MCF 10A (cell line): ENCODE measurements at regions of chr16 and their contacts with region 1.

Region 1: GRCh38 chr16:30378236-30379204 is 3.8 kb downstream of the SEPTIN1 start:
- DNase-seq: peak; percentile 97
- H3K4me3 Mint-ChIP-seq: peak overlapping the region; percentile 92
- H3K27ac Mint-ChIP-seq: peak overlapping the region; percentile 99
- H3K4me1 Mint-ChIP-seq: peaks cover 13% of the 10 kb centered on the region
- H3K27me3 Mint-ChIP-seq: no peaks in the 10 kb centered on the region
- CTCF ChIP-seq: no peak

Region 2: DNA sequence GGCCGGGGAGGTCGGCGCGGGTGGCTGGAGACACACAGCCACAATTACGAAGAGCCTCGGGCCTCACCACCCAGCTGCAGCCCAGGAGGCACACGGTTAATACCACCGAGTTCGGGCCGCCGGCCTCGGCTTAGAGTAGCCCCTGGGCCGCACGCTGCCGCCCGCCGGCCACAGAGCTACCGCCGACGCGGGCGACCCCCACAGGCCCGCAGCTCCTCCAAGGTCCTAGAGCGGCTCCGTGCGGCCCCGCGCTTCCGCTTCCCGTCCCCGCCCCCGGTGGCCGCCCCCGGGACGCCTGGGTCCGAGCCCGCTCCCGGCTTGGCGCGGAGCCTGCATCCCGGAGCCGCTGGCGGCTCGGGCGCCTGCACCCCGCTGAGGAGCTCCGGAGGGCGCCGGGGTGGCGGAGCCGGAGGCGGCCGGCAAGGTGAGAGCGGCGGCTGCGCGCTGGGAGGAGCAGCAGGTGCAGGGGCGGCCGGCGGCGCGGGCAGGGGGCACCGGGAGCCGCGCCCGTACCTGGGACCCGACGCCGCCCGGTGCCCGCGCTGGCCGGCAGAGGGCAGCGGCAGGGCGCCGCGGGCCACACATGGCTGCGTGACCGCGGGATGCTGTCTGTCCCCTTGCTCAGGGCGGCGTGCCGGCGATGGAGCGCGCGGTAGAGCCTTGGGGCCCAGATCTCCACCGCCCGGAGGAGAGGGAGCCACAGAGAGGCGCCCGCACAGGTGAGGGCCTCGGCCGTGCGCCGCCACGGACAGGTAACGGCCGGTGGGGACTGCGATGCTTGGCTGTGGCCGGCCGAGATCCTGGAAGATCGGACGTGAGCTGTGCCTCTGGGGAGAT is 16.9 kb after region 1 on chr16 and contains the start of gene ZNF48:
- CTCF ChIA-PET with region 1: interaction called, 5 read pairs
- POLR2A ChIA-PET with region 1: interaction called, 20 read pairs
- intact Hi-C with region 1: no loop called
- DNase-seq: peak; percentile 56
- H3K4me3 Mint-ChIP-seq: peak within 1 kb of the TSS; percentile 83
- H3K27ac Mint-ChIP-seq: peak within 1 kb of the TSS; percentile 44
- H3K4me1 Mint-ChIP-seq: peaks cover 7% of the 10 kb centered on the region
- H3K27me3 Mint-ChIP-seq: no peaks in the 10 kb centered on the region
- CTCF ChIP-seq: peak; percentile 39
- total RNA-seq, gene ZNF48: 11.0 and 12.4 TPM in 2 replicates

Region 3: DNA sequence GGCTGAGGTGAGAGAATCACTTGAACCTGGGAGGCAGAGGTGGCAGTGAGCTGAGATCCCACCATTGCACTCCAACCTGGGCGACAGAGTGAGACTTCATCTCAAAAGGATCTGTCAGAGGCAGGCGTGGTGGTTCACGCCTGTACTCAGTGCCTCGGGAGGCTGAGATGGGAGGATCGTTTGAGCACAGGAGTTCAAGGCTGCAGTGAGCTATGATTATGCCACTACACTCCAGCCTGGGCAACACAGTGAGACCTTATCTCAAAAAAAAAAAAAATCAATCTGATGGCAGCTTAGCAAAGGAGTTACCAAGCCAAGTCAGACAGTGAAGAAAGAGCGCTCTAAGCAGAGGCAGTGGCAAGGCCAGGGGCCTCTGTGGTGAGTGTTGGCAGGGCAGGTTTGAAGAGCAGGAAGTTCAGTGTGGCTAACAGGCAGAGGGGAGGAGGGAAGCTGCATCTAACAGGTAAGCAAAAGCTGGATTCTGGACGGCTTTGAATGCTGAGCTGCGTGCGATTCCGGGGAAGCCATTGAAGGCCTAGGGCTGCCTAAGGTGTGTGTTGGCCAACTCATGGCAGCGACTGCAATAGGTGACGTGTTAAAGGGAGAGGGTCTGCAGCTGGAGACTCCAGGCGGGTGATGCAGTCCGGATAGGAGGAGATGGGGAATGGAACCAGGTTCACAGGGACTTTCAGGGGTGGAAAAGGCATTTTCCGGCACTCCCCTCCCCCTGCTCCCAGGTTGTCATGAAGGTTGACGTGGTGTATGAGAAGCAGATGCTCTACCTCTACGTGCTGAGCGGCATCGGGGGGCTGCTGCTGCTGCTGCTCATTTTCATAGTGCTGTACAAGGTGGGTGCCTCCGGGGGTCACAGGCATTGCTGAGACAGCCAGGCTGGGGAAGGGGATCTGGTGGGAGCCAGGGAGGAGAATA is 140.9 kb after region 1 on chr16:
- CTCF ChIA-PET with region 1: no interaction called
- POLR2A ChIA-PET with region 1: no interaction called
- intact Hi-C with region 1: no loop called
- DNase-seq: no peak
- H3K4me3 Mint-ChIP-seq: no peak overlapping the region
- H3K27ac Mint-ChIP-seq: no peak overlapping the region
- H3K4me1 Mint-ChIP-seq: peaks cover 8% of the 10 kb centered on the region
- H3K27me3 Mint-ChIP-seq: no peaks in the 10 kb centered on the region
- CTCF ChIP-seq: no peak